OCI-LY7 (cell line): ENCODE measurements at regions of chr10 and their contacts with region 1.

Region 1: GRCh38 chr10:52740913-52741675 is 31.5 kb downstream of the MBL2 start:
- DNase-seq: peak; percentile 55
- H3K4me3 ChIP-seq: no peak overlapping the region
- H3K27ac ChIP-seq: no peak overlapping the region
- H3K4me1 ChIP-seq: no peaks in the 10 kb centered on the region
- CTCF ChIP-seq: peak; percentile 86

Region 2: GRCh38 chr10:52779541-52780390 is 38.7 kb after region 1 on chr10:
- CTCF ChIA-PET with region 1: interaction called, 3 read pairs
- POLR2A ChIA-PET with region 1: no interaction called
- intact Hi-C with region 1: loop called (anchors 1 kb)
- DNase-seq: peak; percentile 68
- H3K4me3 ChIP-seq: no peak overlapping the region
- H3K27ac ChIP-seq: no peak overlapping the region
- H3K4me1 ChIP-seq: no peaks in the 10 kb centered on the region
- CTCF ChIP-seq: peak; percentile 88

Region 3: DNA sequence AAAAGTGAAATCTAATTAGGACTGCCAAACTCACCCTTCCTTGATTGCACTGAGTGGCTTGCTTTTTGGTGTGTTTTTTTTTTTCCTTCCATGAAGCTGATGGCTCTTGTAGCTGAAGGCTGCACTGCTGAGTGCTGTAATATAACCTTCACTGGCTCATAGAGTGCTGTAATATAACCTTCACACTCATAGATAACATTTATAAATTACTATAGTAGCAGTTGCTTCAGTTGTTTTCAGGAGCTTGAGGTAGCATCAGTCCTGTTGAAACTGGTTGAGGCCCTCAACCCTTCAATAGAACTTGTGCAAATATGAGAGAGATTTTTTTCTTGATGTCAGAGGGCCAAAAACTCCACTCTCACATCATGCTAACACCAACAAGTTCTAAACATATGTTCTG is 436.4 kb after region 1 on chr10:
- CTCF ChIA-PET with region 1: no interaction called
- POLR2A ChIA-PET with region 1: no interaction called
- intact Hi-C with region 1: no loop called
- DNase-seq: no peak
- H3K4me3 ChIP-seq: no peak overlapping the region
- H3K27ac ChIP-seq: no peak overlapping the region
- H3K4me1 ChIP-seq: no peaks in the 10 kb centered on the region
- CTCF ChIP-seq: no peak